Caco-2 (cell line): ENCODE measurements at regions of chr4 and their contacts with region 1.

Region 1: GRCh38 chr4:79650794-79651431 is 242.9 kb upstream of the GK2 start:
- DNase-seq: no peak
- H3K4me3 ChIP-seq: no peak overlapping the region
- H3K4me3 Mint-ChIP-seq: no peak overlapping the region
- H3K27ac Mint-ChIP-seq: peak overlapping the region; percentile 76
- H3K4me1 ChIP-seq: peaks cover 29% of the 10 kb centered on the region
- H3K4me1 Mint-ChIP-seq: no peaks in the 10 kb centered on the region
- H3K27me3 ChIP-seq: no peaks in the 10 kb centered on the region
- H3K27me3 Mint-ChIP-seq: no peaks in the 10 kb centered on the region
- CTCF ChIP-seq: no peak

Region 2: DNA sequence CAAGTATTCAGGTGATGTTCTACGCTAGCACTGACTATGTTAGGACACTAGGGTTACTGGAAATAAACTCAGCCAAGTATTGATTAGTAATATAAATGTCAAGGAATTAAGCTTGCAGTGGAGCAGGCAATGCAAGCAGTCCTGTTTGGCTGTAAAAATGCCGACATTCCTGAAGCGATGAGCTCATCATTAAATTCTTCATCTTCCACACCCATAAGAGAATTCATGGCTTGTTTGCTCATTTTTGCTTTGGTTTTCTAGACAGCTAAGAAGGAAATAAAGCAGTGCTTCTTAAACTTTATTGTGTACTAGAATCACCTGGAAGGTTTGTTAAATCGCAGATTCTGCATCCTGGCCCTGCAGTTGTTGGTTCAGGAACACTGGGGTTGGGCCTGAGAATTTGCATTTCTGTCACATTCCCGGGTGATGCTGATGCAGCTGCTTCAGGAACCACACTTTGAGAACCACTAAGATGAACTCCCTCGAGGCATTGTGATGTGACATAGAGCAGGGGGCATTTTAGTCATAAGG is 1081.6 kb before region 1 on chr4:
- CTCF ChIA-PET with region 1: no interaction called
- POLR2A ChIA-PET with region 1: no interaction called
- intact Hi-C with region 1: loop called (anchors 5 kb)
- DNase-seq: peak; percentile 65 to 70
- H3K4me3 ChIP-seq: no peak overlapping the region
- H3K4me3 Mint-ChIP-seq: peak overlapping the region; percentile 46
- H3K27ac Mint-ChIP-seq: peak overlapping the region; percentile 85
- H3K4me1 ChIP-seq: peaks cover 63% of the 10 kb centered on the region
- H3K4me1 Mint-ChIP-seq: peaks cover 40% of the 10 kb centered on the region
- H3K27me3 ChIP-seq: no peaks in the 10 kb centered on the region
- H3K27me3 Mint-ChIP-seq: no peaks in the 10 kb centered on the region
- CTCF ChIP-seq: no peak

Region 3: DNA sequence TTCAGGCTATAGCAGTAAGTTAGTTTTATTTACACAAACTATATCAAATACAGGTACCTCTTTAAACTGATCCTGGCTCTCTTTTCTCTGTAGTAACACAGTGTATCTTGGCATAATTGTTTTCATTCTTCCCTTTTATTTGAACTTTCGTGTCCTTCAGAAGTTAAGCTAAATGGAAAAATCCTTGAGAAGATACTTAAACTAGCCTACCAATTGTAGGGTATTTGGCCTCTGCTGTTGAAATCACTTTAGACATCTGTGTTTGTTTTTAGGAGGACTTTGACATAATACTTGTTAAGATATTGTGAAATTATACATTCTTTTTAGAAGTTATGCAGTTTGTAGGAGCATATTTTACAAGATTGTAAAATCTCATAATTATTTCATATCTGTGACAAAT is 152.6 kb before region 1 on chr4:
- CTCF ChIA-PET with region 1: no interaction called
- POLR2A ChIA-PET with region 1: no interaction called
- intact Hi-C with region 1: no loop called
- DNase-seq: no peak
- H3K4me3 ChIP-seq: no peak overlapping the region
- H3K4me3 Mint-ChIP-seq: no peak overlapping the region
- H3K27ac Mint-ChIP-seq: no peak overlapping the region
- H3K4me1 ChIP-seq: no peaks in the 10 kb centered on the region
- H3K4me1 Mint-ChIP-seq: no peaks in the 10 kb centered on the region
- H3K27me3 ChIP-seq: no peaks in the 10 kb centered on the region
- H3K27me3 Mint-ChIP-seq: peaks cover 4% of the 10 kb centered on the region
- CTCF ChIP-seq: no peak

Region 4: GRCh38 chr4:79552311-79552710 is 98.6 kb before region 1 on chr4:
- CTCF ChIA-PET with region 1: no interaction called
- POLR2A ChIA-PET with region 1: no interaction called
- intact Hi-C with region 1: loop called (anchors 1 kb)
- DNase-seq: peak in 1 of 2 experiments; percentile 41
- H3K4me3 ChIP-seq: no peak overlapping the region
- H3K4me3 Mint-ChIP-seq: no peak overlapping the region
- H3K27ac Mint-ChIP-seq: no peak overlapping the region
- H3K4me1 ChIP-seq: 0 out of 2 replicates have a peak, but pooled peaks cover 4% of the 10 kb centered on the region
- H3K4me1 Mint-ChIP-seq: peaks cover 8% of the 10 kb centered on the region
- H3K27me3 ChIP-seq: no peaks in the 10 kb centered on the region
- H3K27me3 Mint-ChIP-seq: no peaks in the 10 kb centered on the region
- CTCF ChIP-seq: no peak

Region 5: GRCh38 chr4:79597266-79597665 is 53.6 kb before region 1 on chr4:
- CTCF ChIA-PET with region 1: no interaction called
- POLR2A ChIA-PET with region 1: no interaction called
- intact Hi-C with region 1: loop called (anchors 5 kb)
- DNase-seq: no peak
- H3K4me3 ChIP-seq: no peak overlapping the region
- H3K4me3 Mint-ChIP-seq: no peak overlapping the region
- H3K27ac Mint-ChIP-seq: no peak overlapping the region
- H3K4me1 ChIP-seq: no peaks in the 10 kb centered on the region
- H3K4me1 Mint-ChIP-seq: peaks cover 5% of the 10 kb centered on the region
- H3K27me3 ChIP-seq: no peaks in the 10 kb centered on the region
- H3K27me3 Mint-ChIP-seq: peaks cover 2% of the 10 kb centered on the region
- CTCF ChIP-seq: no peak

Region 6: DNA sequence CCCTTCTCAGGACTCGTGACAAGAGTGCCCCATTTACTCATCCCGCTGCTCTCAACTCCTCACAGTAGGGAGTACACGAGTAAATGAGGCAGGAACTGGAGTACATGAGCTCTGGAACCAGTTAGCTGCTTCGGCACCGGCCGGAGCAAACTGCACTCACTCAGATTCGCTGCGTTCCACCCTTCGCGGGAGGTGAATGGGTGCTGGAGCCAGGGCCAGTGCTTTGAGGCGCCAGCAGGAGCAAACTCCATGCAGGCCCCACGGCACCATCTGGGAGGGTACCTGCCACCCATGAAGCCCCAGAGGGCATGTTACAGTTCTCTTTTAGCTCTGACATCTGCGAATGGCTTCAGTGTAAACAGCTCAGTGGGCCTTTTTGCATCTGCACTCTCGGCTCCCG is 72.6 kb after region 1 on chr4:
- CTCF ChIA-PET with region 1: no interaction called
- POLR2A ChIA-PET with region 1: no interaction called
- intact Hi-C with region 1: loop called (anchors 1 kb)
- DNase-seq: no peak
- H3K4me3 ChIP-seq: no peak overlapping the region
- H3K4me3 Mint-ChIP-seq: no peak overlapping the region
- H3K27ac Mint-ChIP-seq: no peak overlapping the region
- H3K4me1 ChIP-seq: no peaks in the 10 kb centered on the region; the same call in 1 of the 2 replicates
- H3K4me1 Mint-ChIP-seq: no peaks in the 10 kb centered on the region
- H3K27me3 ChIP-seq: no peaks in the 10 kb centered on the region
- H3K27me3 Mint-ChIP-seq: peaks cover 3% of the 10 kb centered on the region
- CTCF ChIP-seq: no peak